ENCODE measurements at regions of chr2 and their contacts with region 1.

Region 1: DNA sequence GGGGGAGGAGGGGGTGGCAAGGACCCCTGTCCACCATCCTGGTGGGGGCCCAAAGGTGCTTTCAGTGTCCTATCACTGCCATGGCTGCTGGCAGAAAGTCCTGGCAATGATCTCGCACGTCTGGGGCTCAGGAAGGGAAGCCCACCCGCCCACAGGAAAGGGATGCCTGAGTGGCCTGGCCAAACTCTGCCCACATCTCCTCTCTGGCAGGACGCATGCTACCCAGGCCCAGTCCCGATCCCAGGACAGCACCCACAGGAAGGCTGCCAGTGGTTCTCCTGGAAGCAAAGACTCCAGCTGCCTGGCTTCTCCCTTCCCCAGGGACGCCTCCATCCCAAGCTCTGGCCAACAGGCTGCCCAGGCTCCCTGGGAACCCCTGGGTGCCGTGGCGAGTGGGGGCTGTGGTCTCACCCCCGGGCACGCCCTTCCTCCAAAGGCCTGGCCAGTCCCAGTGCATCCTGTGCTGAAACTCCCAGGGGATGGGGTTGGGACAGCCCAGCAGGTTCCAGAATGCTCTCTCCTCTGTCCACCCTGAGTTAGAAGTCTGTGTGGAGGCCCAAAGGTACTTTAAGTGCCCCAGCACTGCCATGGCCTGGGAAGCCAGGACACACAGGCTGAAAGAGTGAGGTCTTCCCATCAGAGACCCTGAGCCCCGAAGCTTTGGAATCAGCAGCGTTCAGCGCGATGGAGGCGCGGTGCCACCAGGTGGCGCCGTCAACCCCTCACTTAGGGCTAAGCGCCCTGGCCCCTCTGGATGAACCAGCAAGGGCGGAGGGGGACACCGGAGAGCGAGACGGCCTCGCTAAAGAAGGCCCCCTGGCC is 29.8 kb upstream of the TAF1B start:
- DNase-seq: no peak
- H3K4me3 ChIP-seq: no peak overlapping the region
- CTCF ChIP-seq: peak; percentile 97

Region 2: DNA sequence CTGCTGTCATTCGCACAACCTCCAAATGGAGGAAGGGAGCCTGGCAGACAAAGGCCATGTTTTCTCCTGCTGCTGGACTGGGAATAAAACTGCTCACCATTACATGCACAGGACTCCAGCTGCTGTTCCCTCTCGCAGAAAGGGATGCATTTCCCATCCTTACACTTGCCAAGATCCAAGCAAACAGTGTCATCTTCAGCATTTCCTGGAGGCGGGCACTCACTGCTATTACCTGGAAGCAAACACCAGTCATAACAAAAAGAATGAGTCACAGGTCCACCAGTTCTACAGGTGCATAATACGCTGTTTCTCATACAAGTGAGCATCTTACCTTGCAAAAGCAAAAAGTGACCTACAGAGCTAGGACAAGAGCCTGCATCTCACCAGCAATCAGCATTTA is 316.5 kb before region 1 on chr2:
- CTCF ChIA-PET with region 1: no interaction called
- POLR2A ChIA-PET with region 1: no interaction called
- DNase-seq: no peak
- H3K4me3 ChIP-seq: no peak overlapping the region
- CTCF ChIP-seq: no peak

Region 3: GRCh38 chr2:9644603-9645002 is 168.9 kb before region 1 on chr2:
- CTCF ChIA-PET with region 1: no interaction called
- POLR2A ChIA-PET with region 1: no interaction called
- DNase-seq: no peak
- H3K4me3 ChIP-seq: no peak overlapping the region
- CTCF ChIP-seq: no peak

Region 4: DNA sequence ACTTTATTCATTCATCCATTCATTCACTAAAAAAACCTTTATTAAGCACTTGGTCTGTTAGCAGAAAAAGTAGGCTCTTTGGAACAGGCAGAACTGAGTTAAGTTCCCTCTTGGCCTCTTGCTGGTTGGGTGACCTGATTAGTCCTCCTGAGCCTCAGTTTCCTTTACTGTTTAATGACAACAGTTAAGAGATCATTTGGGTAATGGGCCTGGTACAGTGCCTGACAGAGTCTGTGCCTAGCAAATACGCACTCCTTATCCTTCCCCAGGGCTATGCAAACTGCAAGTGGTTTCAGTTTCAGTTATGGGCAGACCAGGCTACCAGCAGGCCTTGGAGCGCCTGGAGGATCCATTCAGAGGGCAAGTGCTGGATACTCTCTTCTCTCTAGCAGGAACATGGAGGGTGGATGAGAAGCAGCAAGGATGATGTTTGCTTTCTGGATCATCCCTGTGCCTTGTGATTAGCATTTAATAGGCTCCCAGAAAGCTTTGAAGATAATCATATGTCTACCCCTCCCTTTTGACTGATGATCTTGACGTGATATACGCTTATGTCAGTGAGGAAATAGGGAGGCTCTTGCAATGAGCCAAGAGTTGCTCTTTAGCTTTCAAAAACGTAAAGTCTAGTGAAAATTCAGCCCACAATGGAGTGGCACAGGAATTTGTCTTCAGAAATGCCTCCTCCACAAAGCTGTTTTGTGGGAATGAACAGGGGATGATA is 17.3 kb after region 1 on chr2:
- CTCF ChIA-PET with region 1: interaction called, 83 read pairs
- POLR2A ChIA-PET with region 1: no interaction called
- DNase-seq: no peak
- H3K4me3 ChIP-seq: no peak overlapping the region
- CTCF ChIP-seq: no peak

Region 5: DNA sequence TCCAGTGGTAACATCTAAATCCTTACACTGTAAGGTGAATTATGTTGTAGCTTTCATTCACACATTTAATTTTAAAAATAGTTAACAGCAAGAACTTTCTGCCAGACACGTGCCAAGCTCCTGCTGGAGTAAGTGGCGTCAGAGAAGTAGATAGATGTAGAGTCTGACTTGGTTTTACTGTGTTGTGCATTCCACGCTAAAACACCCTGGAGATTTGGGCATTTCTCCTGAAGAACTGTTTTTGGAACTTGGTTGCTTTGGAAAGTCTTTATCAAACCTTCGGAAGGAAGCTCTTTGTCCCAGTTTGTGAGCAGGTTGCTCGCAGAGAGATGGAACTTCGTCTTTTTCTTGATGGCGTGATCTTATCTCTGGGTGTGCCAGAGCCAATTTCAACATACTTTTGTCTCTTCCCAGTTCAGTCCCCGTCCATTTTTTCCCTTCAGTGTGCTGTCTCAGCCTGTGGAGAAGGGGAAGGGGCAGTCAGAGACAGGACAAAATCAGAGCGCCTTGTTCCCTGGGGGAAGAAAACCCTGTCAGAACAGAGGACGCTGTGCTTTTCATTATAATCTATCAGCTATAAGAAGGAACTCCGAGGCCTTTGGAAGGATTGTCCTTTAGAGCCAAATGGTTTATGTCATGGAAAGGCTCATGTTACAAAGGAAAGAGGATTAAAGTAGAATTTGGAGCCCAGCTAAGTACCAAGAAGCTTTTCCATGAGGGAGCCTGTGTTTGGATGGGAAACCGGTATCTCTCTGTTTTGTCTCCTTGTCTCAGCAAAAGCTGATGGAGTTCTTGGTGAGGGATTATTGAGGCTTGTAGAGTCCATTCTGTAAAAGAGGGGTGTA is 156.9 kb after region 1 on chr2:
- CTCF ChIA-PET with region 1: interaction called, 11 read pairs
- POLR2A ChIA-PET with region 1: no interaction called
- DNase-seq: no peak
- H3K4me3 ChIP-seq: no peak overlapping the region
- CTCF ChIP-seq: no peak

Region 6: DNA sequence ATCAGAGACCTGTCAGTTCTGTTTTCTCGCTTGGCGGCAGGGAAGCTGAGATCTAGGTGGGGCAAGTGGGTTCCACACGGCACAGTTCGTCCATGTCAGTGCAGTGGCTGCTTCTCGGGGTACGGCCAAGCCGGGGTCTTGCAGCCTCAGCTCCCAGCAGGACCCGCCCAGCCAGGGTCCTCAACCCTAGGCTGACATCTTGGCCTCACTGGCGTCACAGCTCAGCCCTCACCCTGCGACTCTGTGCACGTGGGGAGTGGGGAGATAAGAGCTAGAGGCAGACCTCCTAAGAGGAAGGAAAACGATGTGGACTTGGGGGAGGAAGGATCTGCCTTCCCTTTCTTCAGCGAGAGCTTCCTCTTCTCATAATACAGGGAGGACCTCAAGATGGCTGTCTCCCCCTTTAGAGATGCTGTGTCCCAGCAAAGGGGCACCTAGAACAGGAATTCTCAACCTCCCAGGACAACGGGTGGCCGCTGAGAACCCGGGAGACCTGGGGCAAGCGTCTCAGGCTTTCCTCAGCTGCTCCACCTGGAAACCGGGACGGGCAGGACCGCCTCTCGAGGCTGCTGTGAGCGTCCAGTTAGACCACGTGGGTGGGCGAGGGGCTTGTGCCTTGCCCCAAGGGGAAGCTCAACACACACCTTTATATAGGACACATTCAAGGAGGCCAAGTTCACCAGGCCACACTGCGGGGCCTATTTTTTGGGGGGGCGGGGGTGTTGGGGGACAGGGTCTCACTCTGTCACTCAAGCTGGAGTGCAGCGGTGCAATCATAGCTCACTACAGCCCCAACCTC is 206.3 kb after region 1 on chr2:
- CTCF ChIA-PET with region 1: interaction called, 17 read pairs
- POLR2A ChIA-PET with region 1: no interaction called
- DNase-seq: no peak
- H3K4me3 ChIP-seq: no peak overlapping the region
- CTCF ChIP-seq: no peak

Region 7: GRCh38 chr2:10057231-10058107 is 243.9 kb after region 1 on chr2:
- CTCF ChIA-PET with region 1: interaction called, 293 read pairs
- POLR2A ChIA-PET with region 1: no interaction called
- DNase-seq: no peak
- H3K4me3 ChIP-seq: peak overlapping the region; percentile 34
- CTCF ChIP-seq: no peak